ENCODE measurements at regions of chr15 and their contacts with region 1.

Region 1: DNA sequence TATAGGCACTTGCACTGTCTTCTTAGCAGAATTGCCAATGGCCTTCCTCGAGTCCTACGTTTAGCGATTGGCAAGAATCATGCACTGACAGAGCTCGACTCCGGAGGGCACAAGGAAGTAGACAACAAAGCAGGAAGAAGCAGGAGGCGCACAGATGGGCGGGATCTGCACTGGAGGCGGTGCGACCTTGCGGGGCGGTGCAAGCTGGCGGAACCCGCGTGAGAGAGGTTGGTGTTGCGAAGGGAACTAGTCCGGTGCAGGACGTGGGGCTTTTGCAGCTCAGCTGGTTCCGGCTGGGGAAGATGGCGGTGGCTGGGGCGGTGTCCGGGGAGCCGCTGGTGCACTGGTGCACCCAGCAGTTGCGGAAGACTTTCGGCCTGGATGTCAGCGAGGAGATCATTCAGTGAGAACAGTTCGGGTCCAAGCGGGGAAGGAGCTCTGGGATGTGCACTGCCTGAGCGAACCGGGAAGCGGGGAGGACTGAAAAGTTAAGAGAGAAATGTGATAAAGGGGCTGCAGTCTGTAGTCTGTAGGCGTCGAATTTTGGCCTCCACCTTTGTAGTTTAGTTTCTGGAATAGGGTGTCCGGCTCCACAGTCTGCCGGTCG is at the start of gene TRIP4:
- DNase-seq: peak; percentile 96
- H3K4me3 Mint-ChIP-seq: peak within 1 kb of the TSS; percentile 99
- H3K27ac Mint-ChIP-seq: peak within 1 kb of the TSS; percentile 89
- H3K4me1 Mint-ChIP-seq: peaks cover 17% of the 10 kb centered on the region
- H3K27me3 Mint-ChIP-seq: no peaks in the 10 kb centered on the region
- total RNA-seq, gene TRIP4: 17.5 and 21.7 TPM in 2 replicates

Region 2: DNA sequence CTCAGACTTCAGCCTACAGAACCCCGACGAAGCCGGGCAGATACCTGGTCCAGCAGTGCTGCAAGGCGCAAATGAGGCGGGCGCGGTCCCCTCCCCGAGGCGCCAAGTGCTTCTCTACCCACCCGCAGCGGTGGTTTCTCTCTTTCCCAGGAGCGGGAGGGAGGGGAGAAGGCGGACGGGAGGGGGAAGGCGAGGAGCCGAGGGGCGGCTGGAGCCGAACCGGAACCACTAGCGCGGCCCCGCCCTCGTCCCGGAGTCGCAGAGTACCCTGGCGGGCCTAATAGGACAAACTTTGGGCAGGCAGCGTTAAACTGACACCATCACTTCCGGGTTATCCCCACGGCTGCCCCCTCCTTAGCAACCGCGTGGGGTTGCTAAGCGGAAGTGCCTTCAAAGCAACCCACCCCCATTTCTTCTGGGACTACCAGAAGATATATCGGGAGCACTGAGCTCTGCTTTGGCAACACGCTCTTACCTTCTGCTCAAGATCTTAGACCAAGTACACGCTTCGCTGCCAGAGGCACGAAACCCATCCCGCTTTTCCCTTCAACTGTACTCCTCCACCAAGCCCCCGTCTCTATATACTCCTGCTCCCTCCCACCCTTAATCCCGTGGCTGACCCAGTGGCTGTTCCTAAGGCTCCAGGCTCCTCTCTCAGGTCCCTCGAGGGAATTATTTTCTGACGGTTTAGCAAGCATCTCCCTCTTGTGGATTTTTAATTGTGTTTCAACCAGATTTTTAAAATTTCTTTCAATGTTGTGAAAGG is 31.5 kb before region 1 on chr15 and contains the start of gene CSNK1G1:
- intact Hi-C with region 1: loop called (anchors 1 kb)
- DNase-seq: peak; percentile 87
- H3K4me3 Mint-ChIP-seq: peak within 1 kb of the TSS; percentile 96
- H3K27ac Mint-ChIP-seq: peak within 1 kb of the TSS; percentile 97
- H3K4me1 Mint-ChIP-seq: peaks cover 19% of the 10 kb centered on the region
- H3K27me3 Mint-ChIP-seq: no peaks in the 10 kb centered on the region
- total RNA-seq, gene CSNK1G1: 31.3 and 33.2 TPM in 2 replicates

Region 3: GRCh38 chr15:64398575-64398974 is 10.9 kb after region 1 on chr15:
- intact Hi-C with region 1: no loop called
- DNase-seq: no peak
- H3K4me3 Mint-ChIP-seq: no peak overlapping the region
- H3K27ac Mint-ChIP-seq: no peak overlapping the region
- H3K4me1 Mint-ChIP-seq: no peaks in the 10 kb centered on the region
- H3K27me3 Mint-ChIP-seq: no peaks in the 10 kb centered on the region

Region 4: DNA sequence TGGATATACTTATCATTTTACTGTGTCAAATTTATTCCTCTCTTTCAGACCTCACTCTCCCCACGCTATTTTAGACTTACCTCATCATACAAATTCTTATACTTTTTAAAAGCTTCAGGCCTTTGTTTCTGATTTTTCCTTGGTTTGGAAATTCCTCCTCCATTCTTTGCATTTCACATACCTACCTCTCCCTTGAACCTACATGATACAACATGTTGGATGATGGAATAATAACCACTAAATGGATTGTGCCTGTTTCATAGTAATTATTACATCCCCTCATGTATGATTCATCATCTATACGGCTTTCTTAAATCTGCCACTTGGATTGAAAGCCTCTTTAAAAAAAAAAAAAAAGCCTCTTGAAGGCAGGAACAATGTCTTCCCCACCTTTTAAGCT is 24.6 kb after region 1 on chr15:
- intact Hi-C with region 1: no loop called
- DNase-seq: no peak
- H3K4me3 Mint-ChIP-seq: no peak overlapping the region
- H3K27ac Mint-ChIP-seq: no peak overlapping the region
- H3K4me1 Mint-ChIP-seq: no peaks in the 10 kb centered on the region
- H3K27me3 Mint-ChIP-seq: no peaks in the 10 kb centered on the region

Region 5: GRCh38 chr15:64702816-64703646 is 315.4 kb after region 1 on chr15:
- intact Hi-C with region 1: loop called (anchors 1 kb)
- DNase-seq: peak; percentile 93
- H3K4me3 Mint-ChIP-seq: peak overlapping the region; percentile 82
- H3K27ac Mint-ChIP-seq: peak overlapping the region; percentile 78
- H3K4me1 Mint-ChIP-seq: peaks cover 51% of the 10 kb centered on the region
- H3K27me3 Mint-ChIP-seq: peaks cover under 1% of the 10 kb centered on the region

Region 6: GRCh38 chr15:64989416-64990167 is 601.9 kb after region 1 on chr15 and contains the start of gene SPG21:
- intact Hi-C with region 1: loop called (anchors 1 kb)
- DNase-seq: peak; percentile 92
- H3K4me3 Mint-ChIP-seq: peak within 1 kb of the TSS; percentile 99
- H3K27ac Mint-ChIP-seq: peak within 1 kb of the TSS; percentile 93
- H3K4me1 Mint-ChIP-seq: peaks cover 51% of the 10 kb centered on the region
- H3K27me3 Mint-ChIP-seq: no peaks in the 10 kb centered on the region
- total RNA-seq, gene SPG21: 70.2 and 73.3 TPM in 2 replicates

Measured in activated T-helper 1 cell treated with anti-CD3 and anti-CD28 coated beads, Interleukin-12 subunit alpha, Interleukin-12 subunit beta, Interleukin-2, Interleukin-4 antibody, amounts not matched to agents 30 ng/mL and 10 ng/mL and 1 ng/mL, durations not matched to agents 14 hours and 24 hours and 36 hours (primary cell).